GM12878 (cell line): ENCODE measurements at regions of chr15 and their contacts with region 1.

Region 1: DNA sequence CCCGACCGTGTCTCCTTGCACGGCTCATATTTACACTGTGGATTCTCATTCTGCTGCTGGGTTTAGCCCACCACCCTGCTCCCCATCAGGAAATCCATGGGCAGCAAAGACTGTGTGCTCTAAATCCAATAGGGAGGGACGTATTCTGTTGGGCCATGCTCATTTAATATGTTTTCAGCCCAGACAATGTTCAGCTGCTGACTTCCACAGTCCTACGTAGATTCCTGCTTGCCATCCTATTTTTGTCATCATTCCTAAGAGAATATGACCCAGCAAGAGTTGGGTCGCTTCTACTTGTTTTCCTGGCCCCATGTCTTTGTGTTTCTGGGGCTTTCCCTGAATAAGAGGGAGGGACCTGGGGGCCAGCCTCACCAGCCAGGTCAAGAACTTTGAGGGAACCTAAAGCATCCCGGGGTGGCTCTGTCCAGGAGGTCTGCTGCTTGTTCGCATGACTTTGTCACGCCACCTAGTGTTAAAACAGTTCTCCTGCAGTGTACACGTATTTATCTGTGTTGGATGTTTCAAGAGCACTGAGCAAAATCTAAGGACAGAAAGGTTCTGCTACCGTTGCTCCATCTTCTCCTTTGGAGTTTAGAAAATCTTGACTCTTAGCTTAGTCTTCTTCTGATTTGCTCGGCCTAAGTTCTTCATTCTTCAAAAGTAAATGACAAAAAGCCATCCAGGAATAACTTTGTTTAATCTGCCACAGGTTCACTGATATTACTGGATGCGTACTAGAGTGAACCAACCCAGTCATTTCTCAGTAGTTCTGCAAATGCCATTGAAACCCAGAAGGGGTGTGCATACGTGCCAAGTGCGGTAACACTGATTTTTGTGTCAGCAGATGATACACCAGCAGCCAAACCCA is 79.8 kb upstream of the NR2E3 start:
- DNase-seq: no peak
- ATAC-seq: peak; percentile 94
- H3K4me3 ChIP-seq: no peak overlapping the region
- H3K27ac ChIP-seq: no peak overlapping the region
- H3K4me1 ChIP-seq: no peaks in the 10 kb centered on the region
- H3K27me3 ChIP-seq: 0 out of 4 replicates have a peak, but pooled peaks cover 0 to 2% of the 10 kb centered on the region in 2 experiments
- CTCF ChIP-seq: peak; percentile 68 to 76 (median 75)
- EP300 ChIP-seq: no peak
- POLR2A ChIP-seq: no peak
- RAD21 ChIP-seq: peak; percentile 75

Region 2: GRCh38 chr15:71414823-71415222 is 315.7 kb before region 1 on chr15:
- CTCF ChIA-PET with region 1: no interaction called
- POLR2A ChIA-PET with region 1: no interaction called
- RAD21 ChIA-PET with region 1: no interaction called
- SMC1A ChIA-PET with region 1: no interaction called
- in situ Hi-C with region 1: no loop called
- intact Hi-C with region 1: no loop called
- DNase-seq: no peak
- ATAC-seq: no peak
- H3K4me3 ChIP-seq: no peak overlapping the region
- H3K27ac ChIP-seq: no peak overlapping the region
- H3K4me1 ChIP-seq: no peaks in the 10 kb centered on the region
- H3K27me3 ChIP-seq: no peaks in the 10 kb centered on the region
- CTCF ChIP-seq: no peak
- EP300 ChIP-seq: no peak
- POLR2A ChIP-seq: no peak
- RAD21 ChIP-seq: no peak

Region 3: DNA sequence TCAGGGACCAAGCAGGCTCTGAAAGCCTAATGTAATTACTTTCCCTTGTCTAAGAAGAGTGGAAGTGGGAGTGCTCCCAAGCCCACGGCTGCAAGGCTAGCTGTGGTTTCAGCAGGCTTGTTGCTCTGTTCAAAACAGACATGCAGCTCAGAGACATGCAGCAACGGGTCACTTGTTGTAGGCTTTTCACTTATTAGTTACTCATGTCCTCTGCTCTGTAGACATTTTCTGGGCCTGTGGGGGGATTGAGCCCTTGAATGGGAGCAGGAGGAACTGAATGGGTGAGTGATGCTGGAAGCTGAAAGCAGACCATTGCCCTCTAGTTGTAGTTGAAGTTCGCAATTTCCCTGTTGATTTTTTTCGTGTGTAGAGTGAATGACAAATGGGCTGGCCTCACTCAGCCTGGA is 182.1 kb before region 1 on chr15:
- CTCF ChIA-PET with region 1: no interaction called
- POLR2A ChIA-PET with region 1: no interaction called
- RAD21 ChIA-PET with region 1: no interaction called
- SMC1A ChIA-PET with region 1: no interaction called
- in situ Hi-C with region 1: no loop called
- intact Hi-C with region 1: no loop called
- DNase-seq: no peak
- ATAC-seq: no peak
- H3K4me3 ChIP-seq: no peak overlapping the region
- H3K27ac ChIP-seq: no peak overlapping the region
- H3K4me1 ChIP-seq: no peaks in the 10 kb centered on the region
- H3K27me3 ChIP-seq: 0 out of 4 replicates have a peak, but pooled peaks cover 0 to 1% of the 10 kb centered on the region in 2 experiments
- CTCF ChIP-seq: no peak
- EP300 ChIP-seq: no peak
- POLR2A ChIP-seq: no peak
- RAD21 ChIP-seq: no peak

Region 4: GRCh38 chr15:71575474-71576045 is 155.0 kb before region 1 on chr15:
- CTCF ChIA-PET with region 1: interaction called, 4 read pairs
- POLR2A ChIA-PET with region 1: no interaction called
- RAD21 ChIA-PET with region 1: no interaction called
- SMC1A ChIA-PET with region 1: interaction called, 8 read pairs
- in situ Hi-C with region 1: no loop called
- intact Hi-C with region 1: loop called (anchors 1 kb)
- DNase-seq: no peak
- ATAC-seq: 0 out of 3 replicates have a peak, but pooled peaks have one; percentile 36
- H3K4me3 ChIP-seq: no peak overlapping the region
- H3K27ac ChIP-seq: no peak overlapping the region
- H3K4me1 ChIP-seq: no peaks in the 10 kb centered on the region
- H3K27me3 ChIP-seq: no peaks in the 10 kb centered on the region
- CTCF ChIP-seq: peak; percentile 37 to 53 (median 37); a peak in 4 of 6 replicates
- EP300 ChIP-seq: no peak
- POLR2A ChIP-seq: no peak
- RAD21 ChIP-seq: peak; percentile 55